Prostate gland (tissue), 2 donors: ENCODE measurements at regions of chr5 and their contacts with region 1.

Region 1: GRCh38 chr5:149485655-149486425 is 65.4 kb downstream of the CSNK1A1 start:
- DNase-seq: peak; percentile 99
- H3K4me3 ChIP-seq: no peak overlapping the region
- H3K27ac ChIP-seq: peak overlapping the region; percentile 84 to 94
- H3K4me1 ChIP-seq: peaks cover 33% of the 10 kb centered on the region
- H3K27me3 ChIP-seq: no peaks in the 10 kb centered on the region
- CTCF ChIP-seq: no peak
- POLR2A ChIP-seq: no peak

Region 2: DNA sequence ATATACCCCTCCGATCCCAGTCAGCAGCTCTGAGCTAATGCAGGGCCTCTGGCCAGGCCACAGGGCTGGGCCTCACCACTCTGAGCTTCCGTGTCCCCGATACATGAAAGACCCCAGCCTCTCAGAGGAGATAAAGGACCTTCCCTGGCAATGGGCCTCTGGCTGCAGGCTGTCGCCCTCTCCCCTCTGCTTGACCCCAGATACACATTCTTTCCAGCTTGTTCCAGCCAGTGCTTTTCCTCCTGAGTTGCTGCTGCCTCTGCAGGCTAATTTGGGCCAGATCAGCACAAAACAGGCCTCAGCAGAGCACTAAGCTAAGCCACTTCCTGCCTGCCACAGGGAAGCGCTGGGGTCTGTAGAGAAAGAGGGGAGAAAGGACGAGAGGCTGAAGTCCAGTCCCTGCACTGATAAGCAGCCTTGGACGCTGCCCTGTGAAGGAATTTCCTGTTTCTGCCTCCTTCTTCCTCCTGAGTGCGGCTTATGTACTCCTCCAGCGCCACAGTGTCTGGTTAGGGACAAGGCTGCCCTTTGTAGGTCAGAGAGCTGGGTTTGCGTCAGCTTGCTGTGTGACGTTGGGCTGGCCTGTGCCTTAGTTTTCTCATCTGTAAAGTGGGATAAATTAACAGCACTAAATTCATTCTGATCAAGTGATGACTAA is 33.7 kb before region 1 on chr5:
- intact Hi-C with region 1: loop called (anchors 5 kb)
- DNase-seq: no peak
- H3K4me3 ChIP-seq: no peak overlapping the region
- H3K27ac ChIP-seq: peak overlapping the region; percentile 71
- H3K4me1 ChIP-seq: peaks cover 7% of the 10 kb centered on the region
- H3K27me3 ChIP-seq: no peaks in the 10 kb centered on the region
- CTCF ChIP-seq: no peak
- POLR2A ChIP-seq: no peak

Region 3: GRCh38 chr5:149526845-149527580 is 41.2 kb after region 1 on chr5:
- intact Hi-C with region 1: no loop called
- DNase-seq: no peak
- H3K4me3 ChIP-seq: no peak overlapping the region
- H3K27ac ChIP-seq: peak overlapping the region in 1 of 2 donors; percentile 1
- H3K4me1 ChIP-seq: peaks cover 13% of the 10 kb centered on the region
- H3K27me3 ChIP-seq: no peaks in the 10 kb centered on the region
- CTCF ChIP-seq: no peak
- POLR2A ChIP-seq: no peak